PC-3 (cell line): ENCODE measurements at regions of chr2 and their contacts with region 1.

Region 1: DNA sequence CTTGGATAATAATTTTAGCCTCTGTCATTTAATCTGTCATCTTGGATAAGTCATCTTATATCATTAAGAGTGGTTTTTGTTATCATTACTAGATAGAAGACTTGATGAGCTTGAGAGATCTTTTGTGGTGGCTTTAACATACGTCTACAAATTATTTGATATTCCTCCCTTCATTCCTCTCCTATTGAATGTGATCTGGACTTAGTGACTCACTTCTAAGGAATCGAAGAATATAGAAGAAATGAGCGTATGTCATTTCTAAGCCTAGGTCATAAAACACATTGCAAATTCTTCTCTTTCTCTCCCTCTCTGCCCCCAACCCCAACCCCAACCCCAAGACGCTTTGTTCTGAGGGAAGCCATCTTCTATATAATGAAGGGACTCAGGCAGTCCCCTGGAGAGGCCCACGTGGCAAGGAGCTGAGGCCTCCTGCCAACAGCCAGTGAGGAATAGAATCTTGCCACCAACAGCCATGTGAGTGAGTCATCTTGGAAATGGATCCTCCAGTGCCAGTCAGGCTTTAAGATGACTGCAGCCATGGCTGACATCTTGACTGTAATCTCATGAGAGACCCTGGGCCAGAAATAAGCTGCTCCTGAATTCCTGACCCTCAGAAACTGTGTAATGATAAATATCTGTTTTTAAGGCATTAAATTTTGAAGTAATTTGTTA is 221.6 kb upstream of the SP5 start:
- DNase-seq: peak; percentile 59
- ATAC-seq: no peak; the same call in 1 of the 2 replicates
- H3K4me3 ChIP-seq: no peak overlapping the region
- H3K27ac ChIP-seq: no peak overlapping the region
- H3K4me1 ChIP-seq: peaks cover 9% of the 10 kb centered on the region; the same call in 1 of the 2 replicates
- H3K27me3 ChIP-seq: no peaks in the 10 kb centered on the region
- CTCF ChIP-seq: no peak

Region 2: DNA sequence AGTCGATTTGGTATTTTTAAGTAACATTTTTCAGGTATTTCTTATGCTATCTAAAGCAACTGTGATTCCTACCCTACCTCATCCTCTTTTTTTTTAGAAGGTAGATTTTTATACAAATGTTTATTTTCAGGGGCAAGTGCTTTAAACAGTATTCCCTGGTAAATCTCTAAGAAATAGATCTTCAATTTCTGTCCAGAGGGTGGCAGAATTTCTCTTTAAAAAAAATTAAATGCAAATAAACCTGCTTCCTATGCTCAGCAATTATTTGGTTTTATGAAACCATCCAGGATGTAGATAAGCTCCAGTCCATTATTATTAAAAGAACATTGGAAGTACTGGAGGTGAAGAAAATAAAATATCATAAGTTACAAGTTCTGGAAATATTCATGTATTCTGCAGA is 123.7 kb before region 1 on chr2:
- CTCF ChIA-PET with region 1: no interaction called
- POLR2A ChIA-PET with region 1: no interaction called
- intact Hi-C with region 1: no loop called
- DNase-seq: peak; percentile 79
- ATAC-seq: 0 out of 2 replicates have a peak, but pooled peaks have one; percentile 32
- H3K4me3 ChIP-seq: no peak overlapping the region
- H3K27ac ChIP-seq: no peak overlapping the region
- H3K4me1 ChIP-seq: peaks cover 18% of the 10 kb centered on the region
- H3K27me3 ChIP-seq: no peaks in the 10 kb centered on the region
- CTCF ChIP-seq: peak; percentile 62

Region 3: DNA sequence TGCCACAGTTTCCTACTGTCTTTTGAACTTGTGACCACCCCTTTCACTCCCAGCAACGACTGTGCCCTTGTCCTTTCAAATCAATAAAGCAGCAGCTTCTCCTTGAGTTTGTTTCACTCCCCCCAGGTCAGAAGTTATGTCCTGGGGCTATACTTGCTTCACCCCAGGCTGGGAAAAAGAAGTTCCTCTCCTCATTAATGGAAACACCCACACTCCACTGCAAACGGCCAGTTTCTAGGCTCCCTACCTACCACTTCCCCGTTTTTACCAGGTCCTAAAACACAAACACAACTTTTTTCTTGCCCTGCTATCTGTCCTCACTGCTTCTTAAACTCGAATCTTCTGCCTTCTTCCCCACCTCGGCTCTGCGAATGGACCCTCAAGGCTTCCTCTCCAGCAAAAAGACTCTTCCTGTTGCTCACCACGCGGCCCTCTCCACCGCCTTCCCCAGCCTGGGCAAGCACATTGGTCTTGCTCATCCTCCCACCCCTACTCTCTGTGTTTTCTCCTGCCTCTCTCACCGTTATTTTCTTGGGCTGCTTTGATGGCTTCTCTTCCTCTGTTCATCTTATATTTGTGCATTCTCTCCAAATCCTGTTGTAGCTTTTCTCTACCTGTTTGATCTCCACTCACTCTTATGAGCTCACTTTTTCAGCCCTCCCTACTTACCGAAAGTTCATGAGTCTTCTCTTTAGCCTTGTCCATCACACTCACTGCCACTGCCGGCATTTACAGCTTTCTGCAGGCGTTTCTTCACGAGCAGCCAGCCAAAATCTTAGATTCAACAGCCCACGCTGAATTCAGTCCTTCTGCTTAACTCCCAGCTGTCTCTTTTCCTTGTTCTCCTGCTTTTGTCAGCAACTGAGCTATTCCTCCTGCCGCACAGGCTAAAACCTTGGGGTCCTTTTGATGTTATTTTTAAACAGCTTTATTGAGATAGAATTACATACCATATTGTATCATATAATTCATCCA is 214.5 kb after region 1 on chr2:
- CTCF ChIA-PET with region 1: no interaction called
- POLR2A ChIA-PET with region 1: no interaction called
- intact Hi-C with region 1: loop called (anchors 10 kb)
- DNase-seq: no peak
- ATAC-seq: no peak
- H3K4me3 ChIP-seq: no peak overlapping the region
- H3K27ac ChIP-seq: no peak overlapping the region
- H3K4me1 ChIP-seq: no peaks in the 10 kb centered on the region
- H3K27me3 ChIP-seq: no peaks in the 10 kb centered on the region
- CTCF ChIP-seq: no peak